ENCODE measurements at regions of chr18 and their contacts with region 1.

Region 1: DNA sequence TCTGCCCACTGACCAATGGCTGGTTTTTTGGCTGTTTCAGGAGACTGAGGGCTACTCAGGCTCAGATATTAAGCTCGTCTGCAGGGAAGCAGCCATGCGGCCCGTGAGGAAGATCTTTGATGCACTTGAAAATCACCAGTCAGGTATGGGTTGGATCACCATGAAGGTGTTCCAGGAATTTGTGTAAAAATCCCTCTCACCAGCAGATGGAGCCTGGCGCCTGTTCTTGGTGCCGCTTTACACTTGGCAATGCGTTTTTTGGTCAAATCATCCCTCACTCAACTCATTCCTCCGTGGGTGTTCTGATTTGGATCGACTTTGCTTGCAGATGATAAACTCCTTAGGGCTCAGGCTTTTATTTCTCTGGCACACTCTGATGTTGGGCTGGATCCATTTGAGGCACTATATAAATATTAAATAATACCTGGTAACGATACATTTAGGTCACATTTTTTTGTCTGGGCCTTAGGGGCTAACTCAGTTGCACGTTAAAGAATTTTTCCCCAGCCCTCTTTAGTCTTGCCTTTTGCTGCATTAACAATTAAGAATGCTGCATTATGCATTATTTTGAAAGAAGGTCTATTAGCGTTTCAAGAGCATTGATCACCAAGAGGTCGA is 50.0 kb downstream of the HDHD2 start:
- DNase-seq: peak in 2 of 3 donors; percentile 33 to 59
- ATAC-seq: peak; percentile 87 to 93 (median 88)
- H3K4me3 ChIP-seq: no peak overlapping the region
- H3K27ac ChIP-seq: no peak overlapping the region
- H3K4me1 ChIP-seq: no peaks in the 10 kb centered on the region
- H3K27me3 ChIP-seq: no peaks in the 10 kb centered on the region
- CTCF ChIP-seq: peak; percentile 64 to 75 (median 72)
- POLR2A ChIP-seq: no peak

Region 2: GRCh38 chr18:46366751-46367376 is 733.5 kb before region 1 on chr18:
- intact Hi-C with region 1: no loop called
- DNase-seq: no peak
- ATAC-seq: peak in 1 of 4 donors; percentile 62
- H3K4me3 ChIP-seq: no peak overlapping the region
- H3K27ac ChIP-seq: no peak overlapping the region
- H3K4me1 ChIP-seq: peaks cover 0 to 11% (median 0%) of the 10 kb centered on the region in 4 donors
- H3K27me3 ChIP-seq: no peaks in the 10 kb centered on the region
- CTCF ChIP-seq: no peak
- POLR2A ChIP-seq: no peak

Region 3: GRCh38 chr18:46481048-46481846 is 619.1 kb before region 1 on chr18:
- intact Hi-C with region 1: no loop called
- DNase-seq: peak in 1 of 3 donors; percentile 63
- ATAC-seq: peak; percentile 76 to 89 (median 87)
- H3K4me3 ChIP-seq: no peak overlapping the region
- H3K27ac ChIP-seq: no peak overlapping the region
- H3K4me1 ChIP-seq: no peaks in the 10 kb centered on the region
- H3K27me3 ChIP-seq: no peaks in the 10 kb centered on the region
- CTCF ChIP-seq: peak; percentile 65 to 87 (median 76)
- POLR2A ChIP-seq: no peak

Region 4: DNA sequence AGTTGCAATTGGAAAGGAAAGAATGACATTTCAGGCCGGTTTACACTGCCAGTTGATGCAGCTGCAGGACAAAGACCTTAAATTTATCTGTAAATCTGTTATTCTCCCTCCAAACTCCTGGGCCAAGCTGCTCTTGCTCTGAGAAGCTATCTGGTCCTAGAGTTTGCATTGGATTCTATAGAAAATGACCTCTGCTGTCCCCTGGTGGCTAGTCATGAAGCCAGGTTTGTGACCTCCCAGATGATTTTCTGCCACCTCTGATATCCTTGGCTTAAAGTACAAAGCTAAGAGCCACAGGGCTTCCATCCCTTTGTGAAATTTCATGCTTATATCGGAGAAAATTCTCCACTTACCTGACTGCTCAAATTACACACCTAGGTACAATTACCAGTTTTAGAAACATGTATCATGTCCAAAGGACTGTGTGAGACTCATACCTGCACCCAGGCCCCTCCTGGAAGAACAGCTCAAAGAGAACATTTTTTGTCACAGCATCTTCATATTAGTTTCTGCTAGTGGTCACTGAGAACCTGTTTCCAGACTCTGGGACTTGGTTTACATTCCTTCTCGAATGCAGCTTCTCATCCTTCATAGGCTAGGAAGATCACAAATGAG is 104.7 kb after region 1 on chr18:
- intact Hi-C with region 1: loop called (anchors 5 kb)
- DNase-seq: peak in 1 of 3 donors; percentile 47
- ATAC-seq: peak; percentile 81 to 88 (median 84)
- H3K4me3 ChIP-seq: no peak overlapping the region
- H3K27ac ChIP-seq: no peak overlapping the region
- H3K4me1 ChIP-seq: no peaks in the 10 kb centered on the region
- H3K27me3 ChIP-seq: no peaks in the 10 kb centered on the region
- CTCF ChIP-seq: peak; percentile 76 to 86 (median 78)
- POLR2A ChIP-seq: no peak

Region 5: GRCh38 chr18:47756364-47757016 is 656.2 kb after region 1 on chr18:
- intact Hi-C with region 1: loop called in 1 of 2 experiments (anchors 10 kb)
- DNase-seq: peak; percentile 62 to 68 (median 67)
- ATAC-seq: peak; percentile 85 to 93 (median 88)
- H3K4me3 ChIP-seq: no peak overlapping the region
- H3K27ac ChIP-seq: no peak overlapping the region
- H3K4me1 ChIP-seq: no peaks in the 10 kb centered on the region
- H3K27me3 ChIP-seq: no peaks in the 10 kb centered on the region
- CTCF ChIP-seq: peak; percentile 61 to 93 (median 90)
- POLR2A ChIP-seq: no peak